CD4-positive, alpha-beta memory T cell (primary cell): ENCODE measurements at regions of chr3 and their contacts with region 1.

Region 1: DNA sequence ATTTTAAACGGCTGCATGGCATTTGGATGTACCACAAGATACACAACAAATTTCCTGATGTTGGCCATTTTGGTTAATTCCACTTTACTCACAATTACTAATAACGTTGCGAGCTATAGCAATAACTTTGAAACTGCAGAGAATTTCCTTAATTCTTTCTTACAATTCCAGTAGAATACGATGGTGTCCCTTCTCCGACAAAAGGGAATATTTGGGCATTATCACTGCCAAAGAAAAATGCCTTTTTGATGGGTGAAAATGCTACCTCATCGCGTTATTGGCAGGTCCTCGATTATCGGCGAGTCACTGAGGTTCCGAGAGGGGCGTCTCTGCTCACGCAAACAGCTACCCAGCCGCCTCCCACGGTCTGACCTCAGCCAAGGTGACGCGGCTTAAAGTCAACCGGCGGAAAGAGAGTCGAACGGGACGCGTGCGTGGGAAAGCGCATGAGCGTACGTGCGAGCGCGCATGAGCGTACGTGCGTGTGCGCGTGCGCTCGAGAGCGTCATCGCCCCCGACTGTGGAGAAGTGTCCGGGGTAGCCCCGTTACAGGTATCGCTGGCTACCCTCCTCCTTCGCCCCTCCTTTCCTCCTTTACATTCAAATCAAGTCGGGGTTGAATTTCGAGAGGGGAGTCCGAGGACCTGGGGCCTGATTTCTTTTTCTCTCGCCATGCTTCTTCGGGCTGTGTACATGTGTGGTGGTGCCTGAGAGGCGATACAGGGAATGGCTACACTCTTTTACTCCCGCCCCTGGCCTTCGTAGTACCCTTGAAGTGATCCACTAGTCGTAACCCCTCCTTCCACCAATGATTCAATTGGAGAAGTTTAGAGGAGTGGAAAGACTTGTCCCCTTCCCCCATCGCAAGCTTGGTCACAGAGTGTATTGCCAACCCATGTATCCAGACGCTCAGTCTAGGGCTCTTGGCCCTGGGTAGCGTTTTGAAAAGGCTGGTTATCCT is at the start of gene OXSM:
- DNase-seq: peak; percentile 86 to 94 (median 90)
- H3K4me3 ChIP-seq: peak within 1 kb of the TSS; percentile 75 to 80
- H3K4me3 Mint-ChIP-seq: peak within 1 kb of the TSS; percentile 97 to 99 (median 98)
- H3K27ac ChIP-seq: peak within 1 kb of the TSS; percentile 90
- H3K27ac Mint-ChIP-seq: peak within 1 kb of the TSS; percentile 95 to 100 (median 99)
- H3K4me1 ChIP-seq: peaks cover 28% of the 10 kb centered on the region
- H3K4me1 Mint-ChIP-seq: peaks cover 22 to 51% (median 36%) of the 10 kb centered on the region in 4 donors
- H3K27me3 ChIP-seq: no peaks in the 10 kb centered on the region
- H3K27me3 Mint-ChIP-seq: no peaks in the 10 kb centered on the region
- total RNA-seq, gene OXSM: 13.7 to 17.5 TPM

Region 2: DNA sequence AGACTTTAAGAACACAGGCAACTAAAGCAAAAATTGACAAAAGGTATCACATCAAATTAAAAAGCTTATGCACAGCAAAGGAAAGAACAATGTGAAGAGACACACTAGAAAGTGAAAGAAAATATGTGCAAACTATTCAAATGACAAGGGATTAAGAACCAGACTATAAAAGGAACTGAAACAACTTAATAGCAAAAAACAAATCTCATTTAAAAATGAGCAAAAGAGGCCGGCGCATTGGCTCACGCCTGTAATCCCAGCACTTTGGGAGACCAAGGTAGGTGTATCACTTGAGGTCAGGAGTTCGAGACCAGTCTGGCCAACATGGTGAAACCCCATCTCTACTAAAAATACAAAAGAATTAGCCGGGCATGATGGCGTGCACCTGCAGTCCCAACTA is 21.0 kb before region 1 on chr3:
- CTCF ChIA-PET with region 1: no interaction called
- POLR2A ChIA-PET with region 1: no interaction called
- intact Hi-C with region 1: no loop called
- DNase-seq: no peak
- H3K4me3 ChIP-seq: no peak overlapping the region
- H3K4me3 Mint-ChIP-seq: no peak overlapping the region
- H3K27ac ChIP-seq: no peak overlapping the region
- H3K27ac Mint-ChIP-seq: peak overlapping the region in 1 of 7 donors; percentile 2
- H3K4me1 ChIP-seq: no peaks in the 10 kb centered on the region
- H3K4me1 Mint-ChIP-seq: peaks cover 26 to 49% (median 42%) of the 10 kb centered on the region in 4 donors
- H3K27me3 ChIP-seq: no peaks in the 10 kb centered on the region
- H3K27me3 Mint-ChIP-seq: no peaks in the 10 kb centered on the region

Region 3: GRCh38 chr3:25910997-25911396 is 121.1 kb after region 1 on chr3:
- CTCF ChIA-PET with region 1: no interaction called
- POLR2A ChIA-PET with region 1: no interaction called
- intact Hi-C with region 1: loop called (anchors 5 kb)
- DNase-seq: peak in 4 of 5 donors; percentile 11 to 27 (median 22)
- H3K4me3 ChIP-seq: no peak overlapping the region
- H3K4me3 Mint-ChIP-seq: peak overlapping the region in 4 of 8 donors; percentile 13 to 68 (median 43)
- H3K27ac ChIP-seq: no peak overlapping the region
- H3K27ac Mint-ChIP-seq: peak overlapping the region; percentile 56 to 98 (median 96)
- H3K4me1 ChIP-seq: peaks cover 14% of the 10 kb centered on the region
- H3K4me1 Mint-ChIP-seq: peaks cover 11 to 35% (median 21%) of the 10 kb centered on the region in 4 donors
- H3K27me3 ChIP-seq: no peaks in the 10 kb centered on the region
- H3K27me3 Mint-ChIP-seq: peaks cover 0 to 2% of the 10 kb centered on the region in 2 donors

Region 4: DNA sequence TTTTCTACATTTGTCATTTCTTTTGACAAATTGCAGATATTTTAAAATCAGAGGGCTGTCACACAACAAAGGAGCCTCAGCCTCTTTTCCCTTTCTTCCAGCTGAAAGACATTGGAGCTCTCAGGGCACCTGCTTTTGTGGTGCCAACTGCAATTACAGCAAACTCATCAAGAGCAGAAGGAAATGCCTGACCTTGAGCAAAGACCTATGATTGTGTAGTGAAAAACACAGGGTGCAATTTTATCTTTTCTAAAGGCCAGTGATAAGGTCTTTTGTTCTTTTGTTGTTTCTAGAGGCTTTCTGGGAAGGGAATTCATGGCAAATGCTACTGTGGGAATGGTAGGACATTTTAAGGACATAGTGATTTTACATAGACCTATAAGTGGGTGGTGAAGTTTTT is 214.3 kb after region 1 on chr3:
- CTCF ChIA-PET with region 1: no interaction called
- POLR2A ChIA-PET with region 1: no interaction called
- intact Hi-C with region 1: no loop called
- DNase-seq: no peak
- H3K4me3 ChIP-seq: no peak overlapping the region
- H3K4me3 Mint-ChIP-seq: no peak overlapping the region
- H3K27ac ChIP-seq: no peak overlapping the region
- H3K27ac Mint-ChIP-seq: no peak overlapping the region
- H3K4me1 ChIP-seq: no peaks in the 10 kb centered on the region
- H3K4me1 Mint-ChIP-seq: no peaks in the 10 kb centered on the region
- H3K27me3 ChIP-seq: no peaks in the 10 kb centered on the region
- H3K27me3 Mint-ChIP-seq: no peaks in the 10 kb centered on the region